ENCODE measurements at regions of chr4 and their contacts with region 1.

Region 1: DNA sequence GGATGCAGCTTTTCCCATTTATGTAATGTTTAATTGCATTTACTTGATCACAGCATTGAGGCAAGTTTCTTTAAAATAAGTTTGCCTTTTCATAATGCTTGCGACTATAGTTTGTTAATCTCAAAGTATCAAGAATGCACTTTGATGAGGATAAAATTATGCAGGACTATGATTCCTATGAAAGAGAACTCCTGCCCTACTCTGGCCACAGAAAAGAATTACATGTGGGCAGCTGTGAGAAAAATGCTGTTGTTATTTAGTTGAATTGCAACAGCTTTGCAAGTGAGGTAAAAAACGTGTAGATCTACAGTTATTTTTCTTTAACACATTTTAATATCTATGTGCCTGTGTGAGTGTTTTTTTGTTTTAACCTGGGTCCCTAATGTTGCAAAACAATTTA is 12.5 kb upstream of the OSTC start:
- DNase-seq: no peak
- ATAC-seq: no peak
- H3K4me3 ChIP-seq: no peak overlapping the region
- H3K4me3 Mint-ChIP-seq: no peak overlapping the region
- H3K27ac ChIP-seq: no peak overlapping the region
- H3K27ac Mint-ChIP-seq: no peak overlapping the region
- H3K4me1 ChIP-seq: no peaks in the 10 kb centered on the region
- H3K4me1 Mint-ChIP-seq: peaks cover 0 to 2% (median 0%) of the 10 kb centered on the region in 3 donors
- H3K27me3 ChIP-seq: no peaks in the 10 kb centered on the region
- H3K27me3 Mint-ChIP-seq: no peaks in the 10 kb centered on the region

Region 2: GRCh38 chr4:107815158-107815557 is 822.7 kb before region 1 on chr4:
- CTCF ChIA-PET with region 1: no interaction called
- POLR2A ChIA-PET with region 1: interaction called in 1 of 2 experiments, 11 read pairs
- DNase-seq: no peak
- ATAC-seq: no peak
- H3K4me3 ChIP-seq: no peak overlapping the region
- H3K4me3 Mint-ChIP-seq: no peak overlapping the region
- H3K27ac ChIP-seq: no peak overlapping the region
- H3K27ac Mint-ChIP-seq: no peak overlapping the region
- H3K4me1 ChIP-seq: no peaks in the 10 kb centered on the region
- H3K4me1 Mint-ChIP-seq: no peaks in the 10 kb centered on the region
- H3K27me3 ChIP-seq: peaks cover 0 to 11% of the 10 kb centered on the region in 2 experiments
- H3K27me3 Mint-ChIP-seq: peaks cover 9 to 12% of the 10 kb centered on the region in 2 donors

Region 3: GRCh38 chr4:108683479-108683878 is 45.6 kb after region 1 on chr4:
- CTCF ChIA-PET with region 1: no interaction called
- POLR2A ChIA-PET with region 1: no interaction called
- DNase-seq: peak in 1 of 35 experiments; percentile 23
- ATAC-seq: no peak
- H3K4me3 ChIP-seq: no peak overlapping the region
- H3K4me3 Mint-ChIP-seq: no peak overlapping the region
- H3K27ac ChIP-seq: no peak overlapping the region
- H3K27ac Mint-ChIP-seq: no peak overlapping the region
- H3K4me1 ChIP-seq: no peaks in the 10 kb centered on the region
- H3K4me1 Mint-ChIP-seq: peaks cover 0 to 2% (median 0%) of the 10 kb centered on the region in 3 donors
- H3K27me3 ChIP-seq: no peaks in the 10 kb centered on the region
- H3K27me3 Mint-ChIP-seq: no peaks in the 10 kb centered on the region

Region 4: DNA sequence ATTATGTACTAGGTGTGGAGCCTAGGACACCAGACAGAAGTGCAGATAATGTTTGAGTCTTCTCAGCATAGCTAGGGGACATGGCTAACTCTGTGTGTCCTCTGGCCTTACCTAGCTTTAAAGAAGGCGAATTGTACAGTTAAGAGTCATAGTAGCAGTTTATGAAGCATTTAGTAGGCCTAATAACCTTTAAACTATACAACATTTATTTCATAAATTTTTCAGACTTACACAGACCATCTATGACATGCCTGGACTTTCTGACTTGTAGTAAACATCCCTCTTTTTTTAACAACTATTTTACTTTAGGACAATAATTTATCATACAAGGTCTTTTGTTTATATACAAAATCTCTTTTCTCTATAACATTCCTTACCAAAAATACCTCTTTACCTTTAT is 87.6 kb after region 1 on chr4:
- CTCF ChIA-PET with region 1: no interaction called
- POLR2A ChIA-PET with region 1: no interaction called
- DNase-seq: no peak
- ATAC-seq: no peak
- H3K4me3 ChIP-seq: no peak overlapping the region
- H3K4me3 Mint-ChIP-seq: no peak overlapping the region
- H3K27ac ChIP-seq: no peak overlapping the region
- H3K27ac Mint-ChIP-seq: no peak overlapping the region
- H3K4me1 ChIP-seq: no peaks in the 10 kb centered on the region
- H3K4me1 Mint-ChIP-seq: no peaks in the 10 kb centered on the region
- H3K27me3 ChIP-seq: peaks cover 0 to 3% of the 10 kb centered on the region in 2 experiments
- H3K27me3 Mint-ChIP-seq: peaks cover 0 to 9% of the 10 kb centered on the region in 2 donors

Measured in T-cell (primary cell).